WTC11 (cell line): ENCODE measurements at regions of chrX and their contacts with region 1.

Region 1: GRCh38 chrX:110987292-110987691 is 108.7 kb upstream of the PAK3 start:
- DNase-seq: peak; percentile 24
- ATAC-seq: peak; percentile 88
- H3K4me3 Mint-ChIP-seq: no peak overlapping the region
- H3K27ac Mint-ChIP-seq: no peak overlapping the region
- H3K4me1 Mint-ChIP-seq: peaks cover 15% of the 10 kb centered on the region
- H3K27me3 Mint-ChIP-seq: no peaks in the 10 kb centered on the region
- CTCF ChIP-seq: no peak

Region 2: GRCh38 chrX:110924871-110925270 is 62.4 kb before region 1 on chrX:
- CTCF ChIA-PET with region 1: no interaction called
- POLR2A ChIA-PET with region 1: no interaction called
- DNase-seq: no peak
- ATAC-seq: no peak
- H3K4me3 Mint-ChIP-seq: no peak overlapping the region
- H3K27ac Mint-ChIP-seq: no peak overlapping the region
- H3K4me1 Mint-ChIP-seq: no peaks in the 10 kb centered on the region
- H3K27me3 Mint-ChIP-seq: peaks cover 4% of the 10 kb centered on the region; the same call in 1 of the 2 replicates
- CTCF ChIP-seq: no peak

Region 3: DNA sequence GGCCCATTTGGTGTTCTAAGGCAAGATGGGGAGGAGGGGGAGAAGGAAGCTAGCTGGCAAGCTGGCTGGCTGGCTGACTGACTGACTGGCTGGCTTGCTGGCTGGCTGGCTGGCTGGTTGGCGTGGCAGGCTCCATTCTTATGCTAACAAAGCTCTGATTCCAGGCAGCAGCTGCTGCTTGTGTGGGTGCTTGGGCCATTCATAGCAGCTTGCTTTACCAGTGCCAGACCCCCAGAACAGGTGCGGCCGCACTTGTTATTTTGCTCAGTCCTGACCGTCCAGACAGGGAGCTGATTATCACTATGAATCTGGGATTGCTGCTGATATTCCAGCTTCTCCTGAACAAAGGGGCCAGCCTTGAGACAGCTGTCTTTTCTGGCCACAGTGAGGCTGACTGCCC is 22.5 kb before region 1 on chrX:
- CTCF ChIA-PET with region 1: interaction called, 11 read pairs
- POLR2A ChIA-PET with region 1: interaction called, 4 read pairs
- DNase-seq: peak; percentile 66
- ATAC-seq: peak; percentile 95
- H3K4me3 Mint-ChIP-seq: no peak overlapping the region
- H3K27ac Mint-ChIP-seq: peak overlapping the region; percentile 72
- H3K4me1 Mint-ChIP-seq: peaks cover 19% of the 10 kb centered on the region
- H3K27me3 Mint-ChIP-seq: no peaks in the 10 kb centered on the region
- CTCF ChIP-seq: no peak

Region 4: GRCh38 chrX:111098874-111099273 is 111.6 kb after region 1 on chrX:
- CTCF ChIA-PET with region 1: interaction called, 17 read pairs
- POLR2A ChIA-PET with region 1: no interaction called
- DNase-seq: peak; percentile 79
- ATAC-seq: peak; percentile 44
- H3K4me3 Mint-ChIP-seq: no peak overlapping the region
- H3K27ac Mint-ChIP-seq: no peak overlapping the region
- H3K4me1 Mint-ChIP-seq: peaks cover 26% of the 10 kb centered on the region
- H3K27me3 Mint-ChIP-seq: no peaks in the 10 kb centered on the region; the same call in 1 of the 2 replicates
- CTCF ChIP-seq: peak; percentile 67; the same call in 1 of the 2 replicates

Region 5: DNA sequence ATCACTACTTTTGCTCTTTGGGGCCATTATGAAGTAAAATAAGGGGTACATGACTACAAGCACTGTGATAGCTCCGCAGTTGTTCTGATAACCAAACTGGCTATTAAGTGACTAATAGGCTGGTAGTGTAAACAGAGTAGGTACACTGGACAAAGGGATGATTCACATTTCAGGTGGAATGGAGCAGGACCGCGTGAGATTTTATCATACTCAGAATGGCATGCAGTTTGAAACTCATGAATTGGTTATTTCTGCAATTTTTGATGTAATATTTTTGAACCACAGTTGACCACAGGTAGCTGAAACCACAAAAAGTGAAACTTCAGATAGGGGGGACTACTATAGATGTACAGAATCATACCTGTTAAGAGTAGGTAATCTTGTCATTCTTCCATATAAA is 164.5 kb after region 1 on chrX:
- CTCF ChIA-PET with region 1: no interaction called
- POLR2A ChIA-PET with region 1: no interaction called
- DNase-seq: no peak
- ATAC-seq: no peak
- H3K4me3 Mint-ChIP-seq: no peak overlapping the region
- H3K27ac Mint-ChIP-seq: no peak overlapping the region
- H3K4me1 Mint-ChIP-seq: no peaks in the 10 kb centered on the region
- H3K27me3 Mint-ChIP-seq: no peaks in the 10 kb centered on the region
- CTCF ChIP-seq: no peak